GM12878 (cell line): ENCODE measurements at regions of chr5 and their contacts with region 1.

Region 1: GRCh38 chr5:174951146-174951780 is 226.9 kb downstream of the MSX2 start:
- DNase-seq: no peak
- ATAC-seq: peak; percentile 91
- H3K4me3 ChIP-seq: no peak overlapping the region
- H3K27ac ChIP-seq: no peak overlapping the region
- H3K4me1 ChIP-seq: no peaks in the 10 kb centered on the region
- H3K27me3 ChIP-seq: no peaks in the 10 kb centered on the region
- CTCF ChIP-seq: peak; percentile 84 to 86 (median 85)
- EP300 ChIP-seq: no peak
- POLR2A ChIP-seq: no peak
- RAD21 ChIP-seq: peak; percentile 92

Region 2: DNA sequence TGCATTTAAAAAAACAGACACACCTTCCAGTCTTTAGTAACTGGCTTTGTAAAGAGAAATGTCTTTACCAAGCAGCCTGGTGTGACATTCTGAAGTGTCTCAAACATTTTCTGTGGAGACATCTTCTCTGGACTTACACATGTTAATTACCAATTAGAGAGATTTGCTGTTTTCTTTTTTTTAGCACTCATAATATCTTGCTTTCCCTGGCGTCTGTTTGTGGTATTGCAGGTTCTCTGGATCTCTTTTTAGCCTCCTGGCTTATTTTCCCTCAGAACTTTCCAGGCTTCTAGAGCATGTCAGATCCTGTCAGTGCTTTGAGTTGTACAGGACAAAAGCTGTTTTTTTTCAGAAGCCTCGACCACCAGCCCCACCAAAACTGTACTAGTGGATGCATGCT is 134.4 kb before region 1 on chr5:
- CTCF ChIA-PET with region 1: no interaction called
- POLR2A ChIA-PET with region 1: no interaction called
- RAD21 ChIA-PET with region 1: no interaction called
- SMC1A ChIA-PET with region 1: no interaction called
- in situ Hi-C with region 1: no loop called
- intact Hi-C with region 1: no loop called
- DNase-seq: no peak
- ATAC-seq: no peak
- H3K4me3 ChIP-seq: no peak overlapping the region
- H3K27ac ChIP-seq: no peak overlapping the region
- H3K4me1 ChIP-seq: no peaks in the 10 kb centered on the region
- H3K27me3 ChIP-seq: no peaks in the 10 kb centered on the region
- CTCF ChIP-seq: peak in 2 of 3 experiments; percentile 29 to 34; a peak in 3 of 6 replicates
- EP300 ChIP-seq: no peak
- POLR2A ChIP-seq: no peak
- RAD21 ChIP-seq: no peak

Region 3: DNA sequence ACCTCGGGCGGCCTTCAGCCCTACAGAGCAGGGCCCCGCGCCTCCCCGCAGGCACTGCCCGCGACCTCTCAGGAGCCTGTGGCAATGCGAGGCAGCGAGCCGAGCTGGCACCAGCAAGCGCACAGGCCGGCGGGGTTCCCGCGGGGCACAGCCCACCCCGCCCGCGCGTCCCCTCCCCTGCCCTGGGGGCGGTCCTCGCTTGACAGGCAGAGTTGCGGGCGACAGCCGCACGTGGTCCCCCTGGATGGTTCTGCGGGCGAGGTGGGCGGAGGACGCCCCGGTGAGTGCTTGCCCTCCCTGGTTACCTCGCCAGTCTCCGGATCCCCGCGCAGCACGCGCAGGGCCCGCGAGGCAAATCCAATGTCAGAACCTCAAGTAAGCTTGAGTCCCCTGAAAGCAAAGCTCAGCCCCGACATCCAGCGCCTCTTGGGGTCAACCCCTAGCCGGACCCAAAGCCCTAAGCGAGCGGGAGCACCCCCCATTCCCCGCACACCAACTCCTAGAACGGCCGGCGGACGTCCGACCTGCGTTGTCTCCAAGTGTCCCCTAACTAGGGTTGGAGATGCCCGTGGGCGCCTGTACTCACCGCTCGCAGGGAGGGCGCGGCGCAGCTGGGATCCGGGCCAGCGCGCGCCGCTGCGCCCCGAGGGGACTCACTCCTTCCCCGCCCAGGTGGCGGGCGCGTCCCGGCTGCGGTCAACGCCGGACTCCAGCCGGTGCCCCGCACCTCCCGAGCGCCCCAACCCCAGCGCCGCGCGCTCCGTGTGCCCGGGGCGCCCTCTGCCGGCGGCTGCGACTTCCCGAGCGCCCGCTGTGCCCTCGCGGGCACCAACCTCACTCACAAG is 493.0 kb after region 1 on chr5 and contains the start of gene DRD1:
- CTCF ChIA-PET with region 1: interaction called, 3 read pairs
- POLR2A ChIA-PET with region 1: no interaction called
- RAD21 ChIA-PET with region 1: no interaction called
- SMC1A ChIA-PET with region 1: no interaction called
- in situ Hi-C with region 1: loop called (anchors 5 kb)
- intact Hi-C with region 1: loop called (anchors 1 kb)
- DNase-seq: no peak
- ATAC-seq: peak; percentile 95
- H3K4me3 ChIP-seq: no peak within 1 kb of the TSS
- H3K27ac ChIP-seq: no peak within 1 kb of the TSS
- H3K4me1 ChIP-seq: no peaks in the 10 kb centered on the region
- H3K27me3 ChIP-seq: peaks cover 7 to 13% of the 10 kb centered on the region in 2 experiments
- CTCF ChIP-seq: peak; percentile 57 to 62 (median 58)
- EP300 ChIP-seq: no peak
- POLR2A ChIP-seq: no peak
- RAD21 ChIP-seq: peak; percentile 61
- polyA plus RNA-seq, gene DRD1: not detected

Region 4: DNA sequence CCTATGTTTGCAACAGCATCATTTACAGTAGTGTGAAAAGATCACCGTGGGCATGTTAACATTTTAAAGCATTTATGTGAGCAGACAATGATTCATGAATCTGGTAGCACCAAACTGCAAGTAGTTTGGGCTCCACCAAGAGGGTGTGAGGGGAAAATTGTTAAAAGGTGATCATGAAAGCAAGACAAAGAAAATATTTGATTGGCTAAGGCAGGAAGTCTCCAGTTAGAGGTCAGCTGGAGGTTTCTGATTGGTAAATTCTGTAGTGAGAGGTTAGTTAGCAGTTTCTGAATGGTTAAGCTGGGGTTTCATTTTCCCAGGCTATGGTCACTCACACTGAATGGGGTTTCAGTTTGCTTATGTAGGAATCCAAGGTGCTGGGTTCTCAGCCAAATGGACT is 506.2 kb after region 1 on chr5:
- CTCF ChIA-PET with region 1: interaction called, 5 read pairs
- POLR2A ChIA-PET with region 1: no interaction called
- RAD21 ChIA-PET with region 1: no interaction called
- SMC1A ChIA-PET with region 1: no interaction called
- in situ Hi-C with region 1: no loop called
- intact Hi-C with region 1: loop called (anchors 5 kb)
- DNase-seq: peak; percentile 30
- ATAC-seq: peak; percentile 96
- H3K4me3 ChIP-seq: no peak overlapping the region
- H3K27ac ChIP-seq: no peak overlapping the region
- H3K4me1 ChIP-seq: peaks cover 6% of the 10 kb centered on the region; the same call in 1 of the 2 replicates
- H3K27me3 ChIP-seq: no peaks in the 10 kb centered on the region; a peak in 1 of 4 replicates
- CTCF ChIP-seq: peak in 1 of 3 experiments; percentile 14; a peak in 1 of 6 replicates
- EP300 ChIP-seq: no peak
- POLR2A ChIP-seq: no peak
- RAD21 ChIP-seq: peak; percentile 26

Region 5: DNA sequence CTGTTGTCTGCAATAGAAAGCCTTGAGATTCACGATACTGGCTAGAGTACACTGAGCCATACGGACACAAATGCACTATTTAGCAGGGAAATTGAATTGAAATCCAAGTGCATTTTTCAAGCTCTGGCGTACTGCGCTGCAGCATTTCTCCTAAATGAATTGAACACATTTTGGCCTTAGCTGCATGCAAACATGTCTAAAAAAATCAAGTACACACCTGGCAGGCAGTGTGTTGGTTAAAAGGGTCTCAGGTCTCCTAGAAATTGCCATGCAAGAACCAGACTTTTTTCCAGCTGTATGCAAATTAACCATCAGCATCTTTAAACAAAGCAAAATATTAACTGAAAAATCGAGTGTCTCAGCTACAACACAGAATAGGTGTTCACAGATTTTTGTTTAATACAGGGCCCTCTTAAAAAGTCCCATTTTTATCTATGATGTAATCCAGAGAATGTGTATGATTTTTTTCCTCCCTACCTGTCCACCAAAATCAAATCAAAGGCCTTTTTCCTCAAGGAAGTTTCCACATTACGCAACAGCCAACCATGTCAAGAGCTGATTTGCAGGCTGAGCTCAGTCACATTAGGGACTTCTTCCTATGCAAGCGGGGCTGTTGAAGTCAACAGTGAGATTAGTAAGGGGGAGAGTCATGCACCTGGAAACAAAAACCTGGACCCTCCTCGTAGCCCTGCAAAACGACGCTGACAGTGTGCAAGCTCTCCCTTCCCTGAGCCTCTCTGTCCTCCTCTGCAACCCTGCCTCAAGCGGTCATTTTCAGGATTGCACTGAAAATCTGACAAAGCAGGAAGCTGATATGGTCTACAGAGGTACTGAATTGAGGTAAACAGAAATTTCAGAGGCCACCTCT is 513.0 kb after region 1 on chr5:
- CTCF ChIA-PET with region 1: interaction called, 11 read pairs
- POLR2A ChIA-PET with region 1: no interaction called
- RAD21 ChIA-PET with region 1: no interaction called
- SMC1A ChIA-PET with region 1: no interaction called
- in situ Hi-C with region 1: no loop called
- intact Hi-C with region 1: loop called (anchors 5 kb)
- DNase-seq: no peak
- ATAC-seq: peak; percentile 100
- H3K4me3 ChIP-seq: no peak overlapping the region
- H3K27ac ChIP-seq: no peak overlapping the region
- H3K4me1 ChIP-seq: no peaks in the 10 kb centered on the region
- H3K27me3 ChIP-seq: no peaks in the 10 kb centered on the region; a peak in 2 of 4 replicates
- CTCF ChIP-seq: peak; percentile 69 to 76 (median 74)
- EP300 ChIP-seq: no peak
- POLR2A ChIP-seq: no peak
- RAD21 ChIP-seq: peak; percentile 44

Region 6: DNA sequence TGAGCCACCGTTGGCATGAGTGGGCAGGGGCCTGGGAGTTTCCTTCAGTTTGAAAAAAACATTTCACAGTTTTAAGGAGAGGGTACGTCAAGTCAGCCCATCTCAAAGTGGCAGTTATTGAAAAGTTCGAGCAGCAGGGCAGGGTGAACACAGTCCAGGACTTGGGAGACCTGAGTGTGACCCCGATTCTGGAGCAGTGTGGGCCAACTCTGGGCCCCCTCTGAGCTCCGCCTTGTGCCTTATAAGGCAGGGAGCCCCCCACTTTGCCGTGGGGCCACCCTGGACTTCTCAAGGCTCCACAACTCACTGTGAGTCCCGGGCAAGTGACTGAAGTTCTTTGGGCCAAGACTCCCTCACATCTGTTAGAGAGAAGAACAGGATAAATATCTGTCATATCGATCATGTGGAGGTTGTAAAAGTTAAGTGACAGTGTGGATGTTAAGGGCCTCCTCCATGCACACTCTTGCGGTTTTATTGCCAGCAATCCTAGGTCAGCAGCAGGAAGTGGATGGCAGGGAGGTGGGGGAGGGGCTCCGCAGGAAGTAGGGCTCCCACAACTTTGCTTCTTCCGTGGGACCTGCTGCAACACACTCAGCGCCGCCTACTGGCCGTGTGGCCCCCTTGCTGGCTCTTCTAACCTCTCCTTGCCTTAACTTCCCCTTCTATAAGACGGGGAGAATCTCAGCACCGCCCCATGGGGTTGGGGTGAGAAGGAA is 745.0 kb after region 1 on chr5:
- CTCF ChIA-PET with region 1: interaction called, 3 read pairs
- POLR2A ChIA-PET with region 1: no interaction called
- RAD21 ChIA-PET with region 1: no interaction called
- SMC1A ChIA-PET with region 1: no interaction called
- in situ Hi-C with region 1: loop called (anchors 10 kb)
- intact Hi-C with region 1: no loop called
- DNase-seq: peak; percentile 1
- ATAC-seq: peak; percentile 46
- H3K4me3 ChIP-seq: no peak overlapping the region
- H3K27ac ChIP-seq: no peak overlapping the region
- H3K4me1 ChIP-seq: no peaks in the 10 kb centered on the region
- H3K27me3 ChIP-seq: peaks cover under 1 to 1% of the 10 kb centered on the region in 2 experiments; a peak in 2 of 4 replicates
- CTCF ChIP-seq: peak; percentile 38 to 63 (median 56)
- EP300 ChIP-seq: no peak
- POLR2A ChIP-seq: no peak
- RAD21 ChIP-seq: peak; percentile 36